OCI-LY7 (cell line): ENCODE measurements at regions of chrX and their contacts with region 1.

Region 1: DNA sequence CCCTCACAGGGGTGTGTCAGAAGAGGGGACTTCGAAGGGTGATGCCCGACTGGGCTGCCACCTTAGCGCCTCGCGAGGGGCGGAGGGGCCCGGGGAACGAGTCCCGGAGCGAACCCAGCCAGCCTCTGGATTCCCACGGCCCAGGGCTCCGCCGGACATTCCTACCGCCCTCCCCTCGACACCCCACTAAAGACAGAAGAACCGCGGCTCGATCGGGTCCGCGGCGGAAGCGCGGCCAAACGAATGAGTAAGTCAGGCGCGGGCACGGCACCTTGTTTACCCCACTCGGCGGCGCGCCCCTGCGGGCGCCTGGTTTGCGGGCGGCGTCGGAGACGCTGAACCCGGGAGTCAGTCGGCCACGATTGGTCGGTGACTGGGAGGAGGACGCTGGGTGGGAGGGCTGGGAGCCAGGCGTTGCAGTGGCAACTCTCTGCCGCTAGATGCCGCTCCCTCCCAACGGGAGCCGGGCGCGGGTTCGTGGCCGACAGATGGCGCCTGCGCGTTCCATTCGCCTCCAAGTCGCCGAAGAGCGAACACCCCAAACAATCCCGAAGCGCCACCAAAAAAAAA is 1.4 kb upstream of the STAG2 start:
- DNase-seq: peak; percentile 92
- H3K4me3 ChIP-seq: peak overlapping the region; percentile 93
- H3K27ac ChIP-seq: peak overlapping the region; percentile 96
- H3K4me1 ChIP-seq: peaks cover 16% of the 10 kb centered on the region
- CTCF ChIP-seq: peak; percentile 69

Region 2: GRCh38 chrX:123833387-123833786 is 126.7 kb before region 1 on chrX:
- CTCF ChIA-PET with region 1: no interaction called
- POLR2A ChIA-PET with region 1: interaction called, 4 read pairs
- intact Hi-C with region 1: loop called (anchors 1 kb)
- DNase-seq: peak; percentile 65
- H3K4me3 ChIP-seq: no peak overlapping the region
- H3K27ac ChIP-seq: no peak overlapping the region
- H3K4me1 ChIP-seq: peaks cover 9% of the 10 kb centered on the region
- CTCF ChIP-seq: peak; percentile 78

Region 3: GRCh38 chrX:123859846-123860838 is 100.0 kb before region 1 on chrX and contains the start of gene XIAP:
- CTCF ChIA-PET with region 1: no interaction called
- POLR2A ChIA-PET with region 1: interaction called, 4 read pairs
- intact Hi-C with region 1: loop called (anchors 2 kb)
- DNase-seq: peak; percentile 69
- H3K4me3 ChIP-seq: peak within 1 kb of the TSS; percentile 87
- H3K27ac ChIP-seq: peak within 1 kb of the TSS; percentile 83
- H3K4me1 ChIP-seq: peaks cover 12% of the 10 kb centered on the region
- CTCF ChIP-seq: no peak
- total RNA-seq, gene XIAP: 20.2 and 29.7 TPM in 2 replicates

Region 4: DNA sequence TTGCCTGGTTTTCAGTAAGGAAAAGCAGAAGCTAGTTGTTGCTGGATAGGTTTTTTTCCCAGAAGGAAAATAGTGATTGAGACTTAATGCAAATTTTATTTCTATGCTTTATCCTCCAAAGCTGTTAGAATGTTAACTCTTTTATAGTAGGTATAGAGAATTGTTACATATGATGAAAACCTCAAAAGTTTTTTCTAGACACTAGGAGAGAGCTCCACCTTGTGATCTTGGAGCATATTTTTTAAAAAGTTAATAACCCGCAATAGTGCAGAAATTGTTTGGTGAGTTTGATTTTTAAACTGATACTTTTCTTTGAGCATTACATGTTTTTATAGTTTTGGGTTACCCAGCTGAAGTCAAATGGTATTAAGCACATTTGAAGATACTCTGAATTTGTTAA is 57.9 kb after region 1 on chrX:
- CTCF ChIA-PET with region 1: no interaction called
- POLR2A ChIA-PET with region 1: interaction called, 3 read pairs
- intact Hi-C with region 1: loop called (anchors 1 kb)
- DNase-seq: peak; percentile 5
- H3K4me3 ChIP-seq: no peak overlapping the region
- H3K27ac ChIP-seq: no peak overlapping the region
- H3K4me1 ChIP-seq: no peaks in the 10 kb centered on the region
- CTCF ChIP-seq: peak; percentile 63

Region 5: GRCh38 chrX:124098089-124098488 is 138.0 kb after region 1 on chrX:
- CTCF ChIA-PET with region 1: no interaction called
- POLR2A ChIA-PET with region 1: interaction called, 6 read pairs
- intact Hi-C with region 1: loop called (anchors 5 kb)
- DNase-seq: peak; percentile 48
- H3K4me3 ChIP-seq: no peak overlapping the region
- H3K27ac ChIP-seq: no peak overlapping the region
- H3K4me1 ChIP-seq: no peaks in the 10 kb centered on the region
- CTCF ChIP-seq: peak; percentile 77

Region 6: GRCh38 chrX:124211312-124211942 is 251.3 kb after region 1 on chrX:
- CTCF ChIA-PET with region 1: no interaction called
- POLR2A ChIA-PET with region 1: no interaction called
- intact Hi-C with region 1: loop called (anchors 5 kb)
- DNase-seq: peak; percentile 60
- H3K4me3 ChIP-seq: no peak overlapping the region
- H3K27ac ChIP-seq: no peak overlapping the region
- H3K4me1 ChIP-seq: peaks cover 5% of the 10 kb centered on the region
- CTCF ChIP-seq: peak; percentile 78

Region 7: GRCh38 chrX:124395145-124395880 is 435.2 kb after region 1 on chrX:
- CTCF ChIA-PET with region 1: no interaction called
- POLR2A ChIA-PET with region 1: no interaction called
- intact Hi-C with region 1: loop called (anchors 2 kb)
- DNase-seq: peak; percentile 85
- H3K4me3 ChIP-seq: peak overlapping the region; percentile 55
- H3K27ac ChIP-seq: peak overlapping the region; percentile 98
- H3K4me1 ChIP-seq: peaks cover 64% of the 10 kb centered on the region
- CTCF ChIP-seq: no peak